Panc1 (cell line): ENCODE measurements at regions of chr5 and their contacts with region 1.

Region 1: DNA sequence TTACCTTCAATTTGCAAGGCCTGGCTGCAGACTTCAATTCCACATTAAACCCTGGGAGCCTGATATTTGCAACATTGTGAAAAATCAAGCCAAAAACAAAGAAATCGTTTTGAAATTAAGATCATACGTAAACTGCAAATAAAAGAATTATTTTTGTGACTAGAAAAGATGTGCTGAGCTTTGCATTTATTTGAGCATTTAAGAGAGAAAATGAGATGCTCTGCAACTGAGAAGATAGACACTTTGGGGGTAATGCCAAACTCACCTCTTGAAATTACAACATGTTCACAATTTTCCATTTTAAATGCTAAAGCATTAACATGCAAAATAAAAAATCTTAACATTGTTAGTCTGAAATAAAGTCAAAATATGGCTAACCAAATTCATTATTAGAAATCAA is 46.6 kb downstream of the CSNK1A1 start:
- DNase-seq: no peak
- ATAC-seq: no peak
- H3K4me3 ChIP-seq: no peak overlapping the region
- H3K27ac ChIP-seq: peak overlapping the region; percentile 37; the same call in 1 of the 2 replicates
- H3K4me1 ChIP-seq: peaks cover 7% of the 10 kb centered on the region
- H3K27me3 ChIP-seq: no peaks in the 10 kb centered on the region
- CTCF ChIP-seq: no peak

Region 2: GRCh38 chr5:148713735-148714508 is 790.8 kb before region 1 on chr5:
- CTCF ChIA-PET with region 1: no interaction called
- POLR2A ChIA-PET with region 1: no interaction called
- in situ Hi-C with region 1: no loop called
- intact Hi-C with region 1: no loop called
- DNase-seq: no peak
- ATAC-seq: no peak
- H3K4me3 ChIP-seq: no peak overlapping the region
- H3K27ac ChIP-seq: no peak overlapping the region
- H3K4me1 ChIP-seq: no peaks in the 10 kb centered on the region
- H3K27me3 ChIP-seq: peaks cover 6% of the 10 kb centered on the region
- CTCF ChIP-seq: no peak

Region 3: GRCh38 chr5:149251546-149251945 is 253.1 kb before region 1 on chr5:
- CTCF ChIA-PET with region 1: no interaction called
- POLR2A ChIA-PET with region 1: no interaction called
- in situ Hi-C with region 1: no loop called
- intact Hi-C with region 1: no loop called
- DNase-seq: no peak
- ATAC-seq: no peak
- H3K4me3 ChIP-seq: no peak overlapping the region
- H3K27ac ChIP-seq: no peak overlapping the region
- H3K4me1 ChIP-seq: no peaks in the 10 kb centered on the region
- H3K27me3 ChIP-seq: no peaks in the 10 kb centered on the region
- CTCF ChIP-seq: no peak

Region 4: GRCh38 chr5:149797897-149798296 is 293.2 kb after region 1 on chr5:
- CTCF ChIA-PET with region 1: interaction called, 10 read pairs
- POLR2A ChIA-PET with region 1: no interaction called
- in situ Hi-C with region 1: no loop called
- intact Hi-C with region 1: no loop called
- DNase-seq: no peak
- ATAC-seq: no peak
- H3K4me3 ChIP-seq: no peak overlapping the region
- H3K27ac ChIP-seq: no peak overlapping the region
- H3K4me1 ChIP-seq: peaks cover 11% of the 10 kb centered on the region
- H3K27me3 ChIP-seq: no peaks in the 10 kb centered on the region
- CTCF ChIP-seq: no peak